CD8-positive, alpha-beta T cell (primary cell): ENCODE measurements at regions of chr5 and their contacts with region 1.

Region 1: DNA sequence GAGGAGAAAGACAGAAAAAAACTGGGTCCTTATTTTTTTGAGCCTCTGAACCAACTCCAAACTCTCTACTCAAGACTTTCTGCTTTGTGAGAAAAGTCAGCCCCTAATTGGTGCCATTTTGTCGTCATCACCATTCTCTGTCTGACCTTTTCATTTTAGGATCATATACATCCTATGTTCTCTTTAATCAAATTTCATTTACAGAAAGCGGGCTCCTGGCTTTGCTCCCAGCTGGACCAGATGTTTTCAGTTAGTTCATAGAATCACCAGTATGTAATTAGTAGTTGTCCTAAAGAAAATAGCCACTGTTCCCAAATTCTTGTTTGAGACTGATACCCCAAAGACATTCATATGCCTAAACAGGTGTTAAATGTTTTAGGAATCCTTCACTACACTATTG is 28.6 kb upstream of the SLCO4C1 start:
- DNase-seq: no peak
- ATAC-seq: no peak
- H3K4me3 ChIP-seq: no peak overlapping the region
- H3K4me3 Mint-ChIP-seq: no peak overlapping the region
- H3K27ac ChIP-seq: no peak overlapping the region
- H3K27ac Mint-ChIP-seq: no peak overlapping the region
- H3K4me1 ChIP-seq: no peaks in the 10 kb centered on the region
- H3K4me1 Mint-ChIP-seq: no peaks in the 10 kb centered on the region
- H3K27me3 ChIP-seq: no peaks in the 10 kb centered on the region
- H3K27me3 Mint-ChIP-seq: peaks cover under 1% of the 10 kb centered on the region
- CTCF ChIP-seq: no peak

Region 2: GRCh38 chr5:100444961-100445360 is 1879.8 kb before region 1 on chr5:
- CTCF ChIA-PET with region 1: no interaction called
- POLR2A ChIA-PET with region 1: no interaction called
- intact Hi-C with region 1: loop called in 1 of 2 experiments (anchors 10 kb)
- DNase-seq: no peak
- ATAC-seq: no peak
- H3K4me3 ChIP-seq: no peak overlapping the region
- H3K4me3 Mint-ChIP-seq: no peak overlapping the region
- H3K27ac ChIP-seq: no peak overlapping the region
- H3K27ac Mint-ChIP-seq: no peak overlapping the region
- H3K4me1 ChIP-seq: no peaks in the 10 kb centered on the region
- H3K4me1 Mint-ChIP-seq: no peaks in the 10 kb centered on the region
- H3K27me3 ChIP-seq: no peaks in the 10 kb centered on the region
- H3K27me3 Mint-ChIP-seq: no peaks in the 10 kb centered on the region
- CTCF ChIP-seq: no peak